ENCODE measurements at regions of chr9 and their contacts with region 1.

Region 1: GRCh38 chr9:15510789-15511575 is at the start of gene PSIP1:
- DNase-seq: peak; percentile 91
- H3K4me3 Mint-ChIP-seq: peak within 1 kb of the TSS; percentile 84
- H3K27ac Mint-ChIP-seq: peak within 1 kb of the TSS; percentile 99
- H3K4me1 Mint-ChIP-seq: peaks cover 46% of the 10 kb centered on the region
- H3K27me3 Mint-ChIP-seq: no peaks in the 10 kb centered on the region
- total RNA-seq, gene PSIP1: 109 to 122 TPM

Region 2: DNA sequence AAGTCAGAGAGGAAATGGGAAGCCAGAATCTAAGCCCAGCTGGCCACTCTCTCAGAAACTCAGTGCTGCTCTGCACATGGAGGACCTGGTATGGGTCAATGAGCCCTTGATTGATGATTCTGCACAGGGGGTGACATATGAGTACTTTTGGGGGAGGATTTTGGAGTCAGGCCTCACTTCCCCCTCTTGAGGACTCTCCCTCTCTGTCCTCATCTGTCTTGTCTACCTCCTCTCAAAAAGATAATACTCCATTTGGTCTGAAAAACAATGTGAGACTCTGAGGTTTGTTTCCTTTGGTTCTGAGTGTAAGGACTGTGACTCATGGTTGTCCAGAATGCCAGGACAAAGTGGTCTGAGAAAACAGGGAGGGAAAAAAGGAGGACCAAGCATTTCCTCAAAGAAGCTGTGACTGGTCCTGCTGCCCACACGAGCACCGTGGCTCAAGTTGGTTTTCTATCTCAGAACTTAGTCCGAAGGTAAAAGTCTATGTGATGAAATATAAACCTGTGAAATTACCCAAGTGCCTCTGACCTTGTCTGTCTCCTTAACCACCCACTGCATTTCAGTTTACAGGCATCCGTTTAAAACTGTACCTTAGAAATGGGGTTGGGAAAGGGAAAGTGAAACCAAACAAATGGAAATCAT is 215.1 kb before region 1 on chr9:
- CTCF ChIA-PET with region 1: interaction called, 3 read pairs
- POLR2A ChIA-PET with region 1: interaction called, 11 read pairs
- DNase-seq: no peak
- H3K4me3 Mint-ChIP-seq: peak overlapping the region; percentile 73
- H3K27ac Mint-ChIP-seq: peak overlapping the region; percentile 98
- H3K4me1 Mint-ChIP-seq: peaks cover 72% of the 10 kb centered on the region
- H3K27me3 Mint-ChIP-seq: no peaks in the 10 kb centered on the region

Region 3: DNA sequence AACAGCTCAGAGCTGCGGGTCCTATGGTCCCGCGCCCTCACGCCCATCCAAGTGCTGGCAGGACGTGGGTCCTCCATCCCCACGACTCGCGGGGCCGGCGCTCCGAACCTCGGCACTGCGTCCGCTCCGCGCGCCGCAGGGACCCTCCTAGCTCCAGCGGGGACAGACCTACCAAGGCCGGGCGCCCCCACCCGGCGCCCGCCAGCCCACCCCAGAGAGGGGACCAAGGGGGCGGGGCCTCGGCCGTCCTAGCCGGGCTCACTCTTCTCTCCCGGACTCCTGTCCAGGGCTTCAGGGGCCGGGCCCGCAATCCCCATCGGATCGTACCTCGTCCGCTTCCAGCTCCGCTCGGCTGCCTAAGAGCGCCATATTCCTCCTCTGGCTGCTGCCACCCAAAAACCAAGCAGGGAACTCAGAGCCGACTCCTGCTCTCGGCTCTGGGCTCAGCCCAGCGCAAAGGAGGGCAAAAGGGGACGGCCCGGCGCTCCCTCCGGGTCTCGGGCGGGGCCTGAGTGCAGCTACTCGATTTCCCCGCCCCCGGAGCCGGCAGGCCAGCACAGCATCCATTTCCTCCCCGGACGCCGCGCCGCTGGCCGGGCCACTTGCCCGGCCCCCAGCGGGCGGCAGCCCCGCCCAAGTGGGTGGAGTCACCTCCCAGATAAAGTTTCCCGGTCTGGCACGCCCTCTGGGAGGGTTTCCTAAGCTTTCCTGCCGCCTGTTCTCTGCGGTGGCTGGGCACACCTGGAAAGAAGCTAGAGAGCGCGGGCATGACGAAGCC is 204.0 kb before region 1 on chr9 and contains the start of gene TTC39B:
- CTCF ChIA-PET with region 1: no interaction called
- POLR2A ChIA-PET with region 1: interaction called, 16 read pairs
- DNase-seq: peak; percentile 85
- H3K4me3 Mint-ChIP-seq: peak within 1 kb of the TSS; percentile 92
- H3K27ac Mint-ChIP-seq: peak within 1 kb of the TSS; percentile 86
- H3K4me1 Mint-ChIP-seq: peaks cover 59% of the 10 kb centered on the region
- H3K27me3 Mint-ChIP-seq: no peaks in the 10 kb centered on the region
- total RNA-seq, gene TTC39B: 27.5 to 29.6 TPM

Region 4: DNA sequence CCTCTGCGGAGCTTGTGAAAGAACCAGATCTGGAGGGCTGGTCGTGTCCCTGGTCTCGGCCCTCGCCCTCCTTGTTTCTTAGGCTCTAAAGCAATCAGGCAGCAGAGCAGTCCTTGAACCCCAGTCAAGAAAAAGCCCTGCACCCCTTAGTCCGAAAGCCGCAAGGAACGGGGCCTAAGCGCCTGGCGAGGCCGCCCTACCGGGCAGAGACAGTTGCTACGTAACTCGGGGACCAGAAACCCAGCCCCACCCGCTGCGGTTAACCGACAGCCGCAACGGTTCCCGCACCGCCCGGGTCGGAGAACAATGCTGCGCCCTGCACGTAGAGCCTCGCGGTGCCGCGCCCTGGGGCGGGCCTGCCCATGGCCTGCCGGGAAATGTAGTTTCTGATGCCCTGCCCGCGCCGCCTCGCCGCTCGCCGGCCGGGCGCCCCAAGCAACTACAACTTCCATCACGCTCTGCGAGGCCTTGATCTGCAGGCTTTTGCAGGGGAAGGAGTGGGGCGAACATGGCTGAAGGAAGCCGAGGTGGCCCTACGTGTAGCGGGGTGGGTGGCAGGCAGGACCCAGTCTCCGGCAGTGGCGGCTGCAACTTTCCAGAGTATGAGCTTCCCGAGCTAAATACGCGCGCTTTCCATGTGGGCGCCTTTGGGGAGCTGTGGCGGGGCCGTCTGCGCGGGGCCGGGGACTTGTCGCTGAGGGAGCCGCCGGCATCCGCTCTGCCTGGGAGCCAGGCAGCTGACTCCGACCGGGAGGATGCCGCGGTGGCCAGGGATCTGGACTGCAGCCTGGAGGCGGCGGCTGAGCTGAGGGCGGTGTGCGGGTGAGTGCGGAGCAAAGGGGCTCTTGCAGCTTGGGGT is 88.4 kb before region 1 on chr9 and contains the start of gene SNAPC3:
- CTCF ChIA-PET with region 1: no interaction called
- POLR2A ChIA-PET with region 1: interaction called, 38 read pairs
- DNase-seq: peak; percentile 96
- H3K4me3 Mint-ChIP-seq: peak within 1 kb of the TSS; percentile 93
- H3K27ac Mint-ChIP-seq: peak within 1 kb of the TSS; percentile 83
- H3K4me1 Mint-ChIP-seq: peaks cover 40% of the 10 kb centered on the region
- H3K27me3 Mint-ChIP-seq: peaks cover 6% of the 10 kb centered on the region
- total RNA-seq, gene SNAPC3: 35.6 to 37.5 TPM

Region 5: GRCh38 chr9:15475923-15476536 is 35.0 kb before region 1 on chr9:
- CTCF ChIA-PET with region 1: no interaction called
- POLR2A ChIA-PET with region 1: interaction called, 12 read pairs
- DNase-seq: no peak
- H3K4me3 Mint-ChIP-seq: no peak overlapping the region
- H3K27ac Mint-ChIP-seq: no peak overlapping the region
- H3K4me1 Mint-ChIP-seq: peaks cover 10% of the 10 kb centered on the region
- H3K27me3 Mint-ChIP-seq: no peaks in the 10 kb centered on the region

Region 6: DNA sequence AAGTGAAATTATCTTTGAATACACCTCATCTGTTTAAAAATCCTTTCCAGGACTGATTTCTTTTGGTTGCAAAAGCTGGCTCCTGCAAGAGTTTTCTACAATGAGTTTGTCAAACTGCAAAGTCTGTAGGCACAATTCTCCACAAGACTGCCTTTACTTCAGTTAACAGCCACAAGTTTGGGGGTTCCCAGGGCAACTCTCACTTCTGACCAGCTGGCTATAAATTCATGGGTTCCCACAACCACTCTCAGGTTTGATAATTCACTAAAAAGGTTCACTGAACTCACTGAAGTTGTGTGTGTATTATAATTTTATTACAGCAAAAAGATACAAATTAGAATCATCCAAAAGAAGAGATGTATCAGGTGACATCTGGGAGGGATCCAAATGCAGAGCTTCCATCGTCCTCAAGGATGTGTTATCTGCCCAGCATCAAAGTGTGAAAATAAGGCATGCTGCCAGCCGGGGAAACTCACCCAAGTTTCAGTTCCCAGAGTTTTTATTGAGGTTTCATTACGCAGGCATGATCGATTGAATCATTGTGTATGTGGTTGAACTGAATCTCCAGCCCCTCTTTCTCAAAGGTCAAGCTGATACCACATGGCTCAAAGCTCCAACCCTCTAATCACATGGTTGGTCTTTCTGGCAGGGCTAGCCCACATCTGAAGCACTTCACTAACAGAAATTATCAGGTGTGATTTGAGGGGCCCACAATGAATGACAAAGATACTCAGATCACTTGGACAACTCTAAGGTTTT is 18.8 kb after region 1 on chr9:
- CTCF ChIA-PET with region 1: interaction called, 17 read pairs
- POLR2A ChIA-PET with region 1: interaction called, 7 read pairs
- DNase-seq: no peak
- H3K4me3 Mint-ChIP-seq: no peak overlapping the region
- H3K27ac Mint-ChIP-seq: no peak overlapping the region
- H3K4me1 Mint-ChIP-seq: peaks cover 3% of the 10 kb centered on the region
- H3K27me3 Mint-ChIP-seq: peaks cover 2% of the 10 kb centered on the region

Region 7: GRCh38 chr9:15552636-15553527 is 41.9 kb after region 1 on chr9 and contains the start of gene CCDC171:
- CTCF ChIA-PET with region 1: interaction called, 3 read pairs
- POLR2A ChIA-PET with region 1: interaction called, 45 read pairs
- DNase-seq: peak; percentile 89
- H3K4me3 Mint-ChIP-seq: peak within 1 kb of the TSS; percentile 86
- H3K27ac Mint-ChIP-seq: peak within 1 kb of the TSS; percentile 76
- H3K4me1 Mint-ChIP-seq: peaks cover 19% of the 10 kb centered on the region
- H3K27me3 Mint-ChIP-seq: peaks cover 6% of the 10 kb centered on the region
- total RNA-seq, gene CCDC171: 2.1 to 2.5 TPM

Region 8: DNA sequence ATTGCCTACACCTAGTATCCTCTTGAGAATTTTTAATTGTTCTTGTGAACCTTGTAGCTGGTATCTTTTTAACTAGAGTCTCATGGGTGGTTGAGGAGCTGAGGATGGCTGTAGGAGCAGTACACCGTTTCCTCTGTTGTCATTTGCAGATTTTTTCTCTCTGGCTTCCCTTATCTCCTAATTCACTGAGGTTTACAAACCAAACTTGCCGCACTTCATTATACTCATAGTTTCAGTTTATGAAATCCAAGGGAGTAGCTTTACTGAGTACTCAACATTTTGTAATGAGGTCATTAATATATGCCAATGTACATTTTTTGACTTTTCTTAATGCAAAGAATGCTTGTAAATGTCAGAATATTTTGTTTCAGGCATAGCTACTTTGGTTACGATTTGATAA is 196.0 kb after region 1 on chr9:
- CTCF ChIA-PET with region 1: no interaction called
- POLR2A ChIA-PET with region 1: no interaction called
- DNase-seq: no peak
- H3K4me3 Mint-ChIP-seq: no peak overlapping the region
- H3K27ac Mint-ChIP-seq: no peak overlapping the region
- H3K4me1 Mint-ChIP-seq: no peaks in the 10 kb centered on the region
- H3K27me3 Mint-ChIP-seq: no peaks in the 10 kb centered on the region

Region 9: DNA sequence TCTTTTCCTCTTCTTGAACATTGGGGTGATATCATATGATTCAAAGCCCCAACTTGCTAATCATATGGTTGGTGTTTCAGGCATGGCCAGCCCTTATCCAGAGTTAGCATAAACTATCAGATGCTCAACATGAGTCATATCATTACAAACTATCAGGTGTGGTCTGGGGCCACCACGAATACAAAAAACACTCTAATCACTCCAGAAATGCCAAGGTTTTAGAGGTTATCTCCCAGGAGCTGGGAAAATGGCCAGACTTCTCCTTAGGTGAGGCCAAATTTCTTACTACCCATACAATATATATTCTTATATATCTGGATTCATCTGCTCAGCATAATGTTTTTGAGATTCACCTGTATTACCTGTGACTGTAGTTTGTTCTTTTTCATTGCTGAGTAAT is 252.4 kb after region 1 on chr9:
- CTCF ChIA-PET with region 1: no interaction called
- POLR2A ChIA-PET with region 1: no interaction called
- DNase-seq: no peak
- H3K4me3 Mint-ChIP-seq: no peak overlapping the region
- H3K27ac Mint-ChIP-seq: no peak overlapping the region
- H3K4me1 Mint-ChIP-seq: no peaks in the 10 kb centered on the region
- H3K27me3 Mint-ChIP-seq: no peaks in the 10 kb centered on the region